GM12878 (cell line): ENCODE measurements at regions of chr4 and their contacts with region 1.

Region 1: DNA sequence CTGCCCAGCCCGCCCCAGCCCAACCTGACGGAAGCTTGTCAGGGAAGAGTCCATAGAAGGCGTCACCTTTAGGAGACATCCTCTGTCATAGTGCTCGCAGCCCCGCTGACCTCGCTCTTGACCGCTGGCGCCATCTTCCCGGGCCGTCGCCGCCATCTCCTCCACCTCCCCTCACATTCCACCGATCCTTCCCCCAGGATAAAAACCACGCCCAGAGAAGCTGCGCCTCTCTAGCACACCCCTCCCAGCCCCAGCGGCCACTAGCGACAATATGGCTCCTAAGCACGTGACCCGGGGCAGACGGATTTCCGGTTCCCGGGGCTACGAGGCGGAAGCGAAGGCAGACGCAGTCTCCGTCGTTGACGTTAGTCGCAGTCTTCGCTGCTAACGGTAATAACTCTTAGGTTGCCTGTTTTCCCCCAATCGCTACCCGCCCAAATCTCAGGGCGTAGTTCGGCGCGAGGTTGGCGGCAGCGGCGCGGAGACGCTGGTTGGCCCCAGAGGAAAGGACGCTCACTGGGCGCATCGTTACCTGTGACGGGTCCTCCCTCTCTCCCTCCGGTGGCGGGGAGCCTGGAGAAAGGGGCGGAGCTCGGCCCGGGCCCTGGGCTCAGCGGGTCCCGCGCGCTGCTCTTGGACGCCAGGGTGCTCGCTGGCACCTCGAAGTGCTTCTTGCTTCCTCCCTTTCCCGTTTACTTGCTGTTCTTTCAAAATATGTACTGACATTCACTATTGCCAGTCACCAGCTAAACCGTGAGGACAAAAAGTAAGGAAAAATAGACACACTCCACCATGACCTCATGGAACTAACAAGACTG is at the starts of genes RCHY1 and THAP6:
- DNase-seq: peak; percentile 78
- ATAC-seq: peak; percentile 91
- H3K4me3 ChIP-seq: peak within 1 kb of the TSS; percentile 98
- H3K27ac ChIP-seq: peak within 1 kb of the TSS; percentile 84
- H3K4me1 ChIP-seq: no peaks in the 10 kb centered on the region
- H3K27me3 ChIP-seq: no peaks in the 10 kb centered on the region
- CTCF ChIP-seq: no peak
- EP300 ChIP-seq: no peak; a peak in 1 of 4 replicates
- POLR2A ChIP-seq: peak; percentile 98
- RAD21 ChIP-seq: no peak
- polyA plus RNA-seq, gene RCHY1: 19.9 to 25.0 TPM
- polyA plus RNA-seq, gene THAP6: 8.9 to 9.4 TPM

Region 2: GRCh38 chr4:75499900-75500299 is 14.4 kb before region 1 on chr4:
- CTCF ChIA-PET with region 1: interaction called, 4 read pairs
- POLR2A ChIA-PET with region 1: interaction called, 4 read pairs
- RAD21 ChIA-PET with region 1: no interaction called
- SMC1A ChIA-PET with region 1: interaction called, 10 read pairs
- in situ Hi-C with region 1: no loop called
- intact Hi-C with region 1: no loop called
- DNase-seq: no peak
- ATAC-seq: no peak
- H3K4me3 ChIP-seq: no peak overlapping the region
- H3K27ac ChIP-seq: no peak overlapping the region
- H3K4me1 ChIP-seq: no peaks in the 10 kb centered on the region
- H3K27me3 ChIP-seq: no peaks in the 10 kb centered on the region
- CTCF ChIP-seq: no peak
- EP300 ChIP-seq: no peak
- POLR2A ChIP-seq: no peak
- RAD21 ChIP-seq: no peak

Region 3: DNA sequence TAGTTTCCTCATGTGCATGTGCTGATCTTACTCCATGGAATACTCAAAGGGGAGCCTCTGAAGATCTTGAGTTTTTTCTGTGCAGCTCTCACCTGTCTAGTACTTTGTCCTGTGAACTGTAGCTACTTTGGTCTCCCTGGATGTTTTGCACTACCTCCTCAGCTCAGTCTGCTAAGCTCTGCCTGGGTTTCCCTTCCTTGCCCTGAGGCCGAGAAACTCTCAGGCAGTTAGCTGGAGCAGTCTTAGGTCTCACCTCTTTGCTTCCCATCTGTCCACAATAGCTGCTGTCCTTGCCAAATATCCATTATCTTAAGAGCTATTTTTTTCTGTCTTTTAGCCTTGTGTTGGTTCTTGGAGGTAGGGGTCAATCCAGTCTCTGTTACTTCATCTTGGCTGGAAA is 11.6 kb after region 1 on chr4:
- CTCF ChIA-PET with region 1: interaction called, 5 read pairs
- POLR2A ChIA-PET with region 1: interaction called, 11 read pairs
- RAD21 ChIA-PET with region 1: interaction called, 4 read pairs
- SMC1A ChIA-PET with region 1: interaction called, 13 read pairs
- in situ Hi-C with region 1: no loop called
- intact Hi-C with region 1: no loop called
- DNase-seq: no peak
- ATAC-seq: no peak
- H3K4me3 ChIP-seq: no peak overlapping the region
- H3K27ac ChIP-seq: no peak overlapping the region
- H3K4me1 ChIP-seq: no peaks in the 10 kb centered on the region
- H3K27me3 ChIP-seq: no peaks in the 10 kb centered on the region
- CTCF ChIP-seq: no peak
- EP300 ChIP-seq: no peak
- POLR2A ChIP-seq: no peak
- RAD21 ChIP-seq: no peak